ENCODE measurements at regions of chr17 and their contacts with region 1.

Region 1: DNA sequence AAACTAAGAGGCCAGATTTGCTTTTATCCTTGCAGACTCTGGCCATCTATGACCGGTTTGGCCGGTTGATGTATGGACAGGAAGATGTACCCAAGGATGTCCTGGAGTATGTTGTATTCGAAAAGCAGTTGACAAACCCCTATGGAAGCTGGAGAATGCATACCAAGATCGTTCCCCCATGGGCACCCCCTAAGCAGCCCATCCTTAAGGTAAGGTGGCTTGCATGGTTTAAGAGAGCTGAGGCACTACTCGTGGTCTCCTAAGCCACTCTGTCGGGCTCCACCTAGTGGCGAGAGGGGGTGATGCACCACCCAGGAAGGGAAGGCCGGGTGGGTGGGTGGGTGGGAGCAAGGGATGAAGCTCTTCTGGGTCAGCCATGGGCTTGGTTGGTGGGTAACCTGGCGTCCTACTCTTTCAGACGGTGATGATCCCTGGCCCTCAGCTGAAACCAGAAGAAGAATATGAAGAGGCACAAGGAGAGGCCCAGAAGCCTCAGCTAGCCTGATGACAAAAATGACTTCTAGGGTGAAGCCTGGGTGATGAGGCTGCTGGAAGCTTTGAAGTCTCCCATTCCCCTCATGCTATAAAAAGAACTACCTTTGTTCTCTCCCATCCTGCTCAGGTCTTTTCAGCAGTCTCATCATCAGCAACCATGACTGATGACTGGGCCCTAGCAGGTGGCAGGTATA is 21.5 kb downstream of the GPR179 start:
- DNase-seq: peak; percentile 84
- CTCF ChIP-seq: peak; percentile 69

Region 2: GRCh38 chr17:38333635-38334295 is 11.5 kb after region 1 on chr17:
- CTCF ChIA-PET with region 1: interaction called, 72 read pairs
- POLR2A ChIA-PET with region 1: no interaction called
- DNase-seq: peak; percentile 68
- CTCF ChIP-seq: peak; percentile 71

Region 3: GRCh38 chr17:38369124-38369886 is 47.1 kb after region 1 on chr17:
- CTCF ChIA-PET with region 1: interaction called, 12 read pairs
- POLR2A ChIA-PET with region 1: no interaction called
- DNase-seq: no peak
- CTCF ChIP-seq: no peak

Measured in GM10248 (cell line).